ENCODE measurements at regions of chr2 and their contacts with region 1.

Region 1: GRCh38 chr2:158456309-158457066 is at the starts of genes CCDC148 and PKP4:
- DNase-seq: peak; percentile 95
- ATAC-seq: peak; percentile 97
- H3K4me3 Mint-ChIP-seq: peak within 1 kb of the TSS; percentile 92
- H3K27ac Mint-ChIP-seq: peak within 1 kb of the TSS; percentile 72
- H3K4me1 Mint-ChIP-seq: peaks cover 25% of the 10 kb centered on the region
- H3K27me3 Mint-ChIP-seq: peaks cover 5% of the 10 kb centered on the region
- total RNA-seq, gene CCDC148: 0.23 to 0.26 TPM
- total RNA-seq, gene PKP4: 39.2 to 58.4 TPM

Region 2: GRCh38 chr2:157628477-157629415 is 827.7 kb before region 1 on chr2 and contains the start of gene ACVR1C:
- CTCF ChIA-PET with region 1: no interaction called
- POLR2A ChIA-PET with region 1: no interaction called
- intact Hi-C with region 1: loop called in 1 of 2 experiments (anchors 2 kb)
- DNase-seq: peak; percentile 80
- ATAC-seq: peak; percentile 82
- H3K4me3 Mint-ChIP-seq: peak within 1 kb of the TSS; percentile 76
- H3K27ac Mint-ChIP-seq: peak within 1 kb of the TSS; percentile 23
- H3K4me1 Mint-ChIP-seq: peaks cover 34% of the 10 kb centered on the region
- H3K27me3 Mint-ChIP-seq: peaks cover 5% of the 10 kb centered on the region
- total RNA-seq, gene ACVR1C: 1.6 to 1.7 TPM

Region 3: DNA sequence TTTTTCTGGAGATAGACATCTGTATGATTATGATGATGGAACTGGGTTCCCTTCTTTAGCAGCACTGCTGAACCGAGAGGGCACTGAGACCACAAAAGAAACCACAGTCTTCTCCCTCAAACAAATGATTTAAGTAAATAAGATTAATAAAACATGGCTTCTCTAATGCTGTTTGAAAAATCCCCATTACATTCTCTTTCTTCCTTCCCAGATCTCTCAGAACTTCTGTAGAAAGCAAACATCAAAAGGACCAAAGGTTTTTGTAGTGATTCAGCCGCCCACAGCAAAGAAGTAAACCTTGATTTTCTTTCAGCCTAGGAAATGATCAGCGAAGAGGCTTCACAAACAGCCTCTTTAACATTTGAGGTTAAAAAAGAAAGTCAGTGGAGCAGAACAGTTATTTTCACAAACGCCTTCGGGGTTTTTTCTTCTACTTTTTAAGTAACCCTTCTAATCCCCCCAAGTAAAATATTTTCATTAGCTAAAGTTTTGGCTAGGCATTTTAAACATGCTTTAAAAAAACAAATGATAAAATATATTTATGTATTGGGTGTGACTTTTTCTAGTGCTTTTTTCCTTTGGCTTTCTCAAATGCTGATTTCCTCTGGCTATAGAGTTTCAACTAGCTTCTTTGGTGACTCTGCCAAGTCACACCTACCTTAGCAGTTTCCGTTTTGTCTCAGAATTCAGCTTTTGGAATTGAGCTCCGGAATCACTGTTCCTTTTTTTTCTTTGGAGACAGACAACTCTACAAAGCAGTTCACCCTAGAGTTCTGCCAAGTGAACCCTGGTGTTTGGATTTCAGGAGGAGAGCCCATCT is 265.2 kb before region 1 on chr2:
- CTCF ChIA-PET with region 1: no interaction called
- POLR2A ChIA-PET with region 1: no interaction called
- intact Hi-C with region 1: loop called (anchors 5 kb)
- DNase-seq: peak; percentile 45
- ATAC-seq: peak; percentile 91
- H3K4me3 Mint-ChIP-seq: peak overlapping the region; percentile 15
- H3K27ac Mint-ChIP-seq: peak overlapping the region; percentile 63
- H3K4me1 Mint-ChIP-seq: peaks cover 31% of the 10 kb centered on the region
- H3K27me3 Mint-ChIP-seq: peaks cover 30% of the 10 kb centered on the region

Region 4: GRCh38 chr2:158391876-158392275 is 64.6 kb before region 1 on chr2:
- CTCF ChIA-PET with region 1: no interaction called
- POLR2A ChIA-PET with region 1: no interaction called
- intact Hi-C with region 1: loop called in 1 of 2 experiments (anchors 2 kb)
- DNase-seq: no peak
- ATAC-seq: peak; percentile 92
- H3K4me3 Mint-ChIP-seq: no peak overlapping the region
- H3K27ac Mint-ChIP-seq: peak overlapping the region; percentile 59
- H3K4me1 Mint-ChIP-seq: peaks cover 8% of the 10 kb centered on the region
- H3K27me3 Mint-ChIP-seq: peaks cover 12% of the 10 kb centered on the region

Region 5: GRCh38 chr2:158578703-158579330 is 122.3 kb after region 1 on chr2:
- CTCF ChIA-PET with region 1: no interaction called
- POLR2A ChIA-PET with region 1: no interaction called
- intact Hi-C with region 1: no loop called
- DNase-seq: no peak
- ATAC-seq: no peak
- H3K4me3 Mint-ChIP-seq: no peak overlapping the region
- H3K27ac Mint-ChIP-seq: no peak overlapping the region
- H3K4me1 Mint-ChIP-seq: no peaks in the 10 kb centered on the region
- H3K27me3 Mint-ChIP-seq: no peaks in the 10 kb centered on the region

Region 6: DNA sequence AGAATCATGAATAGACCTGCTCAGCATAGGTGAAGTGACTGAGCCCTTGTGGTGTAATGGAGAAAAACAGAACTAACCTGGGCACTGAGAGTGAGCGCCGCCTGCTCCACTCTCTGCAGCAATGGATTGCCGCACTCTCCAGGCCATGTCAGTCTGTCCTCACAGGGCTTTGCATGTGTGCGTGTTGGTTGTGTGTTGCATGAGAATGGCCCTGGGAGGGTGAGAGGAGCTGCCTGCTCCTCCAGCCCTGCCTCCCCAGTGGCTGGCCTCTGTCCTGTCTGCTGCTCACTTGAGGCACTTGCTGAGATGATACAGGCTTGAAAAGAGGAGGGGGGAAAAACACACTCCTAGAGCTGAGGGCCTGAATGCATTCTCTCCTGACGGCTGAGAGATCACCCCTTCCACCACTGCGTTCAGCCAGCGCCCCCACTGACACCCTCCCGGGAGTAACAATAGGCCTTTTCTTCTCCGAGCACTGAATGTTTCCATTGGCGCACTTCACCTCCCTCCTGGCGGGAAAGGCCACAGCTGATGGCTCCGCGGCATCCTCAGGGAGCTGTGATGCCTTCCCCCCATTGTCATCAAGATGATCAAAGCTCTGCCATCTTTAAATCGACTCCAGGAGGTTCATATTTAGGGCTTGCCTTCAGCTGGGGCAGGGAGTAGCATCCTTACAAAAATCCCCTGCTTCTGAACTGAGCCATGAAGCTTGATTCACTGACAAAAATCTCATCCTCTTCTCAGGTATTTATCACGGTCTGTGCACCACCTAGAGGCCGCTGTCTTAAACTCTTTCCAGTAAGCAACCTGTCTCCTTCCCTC is 288.8 kb after region 1 on chr2:
- CTCF ChIA-PET with region 1: no interaction called
- POLR2A ChIA-PET with region 1: no interaction called
- intact Hi-C with region 1: loop called (anchors 5 kb)
- DNase-seq: peak; percentile 65
- ATAC-seq: no peak
- H3K4me3 Mint-ChIP-seq: no peak overlapping the region
- H3K27ac Mint-ChIP-seq: no peak overlapping the region
- H3K4me1 Mint-ChIP-seq: no peaks in the 10 kb centered on the region
- H3K27me3 Mint-ChIP-seq: peaks cover 23% of the 10 kb centered on the region

Region 7: DNA sequence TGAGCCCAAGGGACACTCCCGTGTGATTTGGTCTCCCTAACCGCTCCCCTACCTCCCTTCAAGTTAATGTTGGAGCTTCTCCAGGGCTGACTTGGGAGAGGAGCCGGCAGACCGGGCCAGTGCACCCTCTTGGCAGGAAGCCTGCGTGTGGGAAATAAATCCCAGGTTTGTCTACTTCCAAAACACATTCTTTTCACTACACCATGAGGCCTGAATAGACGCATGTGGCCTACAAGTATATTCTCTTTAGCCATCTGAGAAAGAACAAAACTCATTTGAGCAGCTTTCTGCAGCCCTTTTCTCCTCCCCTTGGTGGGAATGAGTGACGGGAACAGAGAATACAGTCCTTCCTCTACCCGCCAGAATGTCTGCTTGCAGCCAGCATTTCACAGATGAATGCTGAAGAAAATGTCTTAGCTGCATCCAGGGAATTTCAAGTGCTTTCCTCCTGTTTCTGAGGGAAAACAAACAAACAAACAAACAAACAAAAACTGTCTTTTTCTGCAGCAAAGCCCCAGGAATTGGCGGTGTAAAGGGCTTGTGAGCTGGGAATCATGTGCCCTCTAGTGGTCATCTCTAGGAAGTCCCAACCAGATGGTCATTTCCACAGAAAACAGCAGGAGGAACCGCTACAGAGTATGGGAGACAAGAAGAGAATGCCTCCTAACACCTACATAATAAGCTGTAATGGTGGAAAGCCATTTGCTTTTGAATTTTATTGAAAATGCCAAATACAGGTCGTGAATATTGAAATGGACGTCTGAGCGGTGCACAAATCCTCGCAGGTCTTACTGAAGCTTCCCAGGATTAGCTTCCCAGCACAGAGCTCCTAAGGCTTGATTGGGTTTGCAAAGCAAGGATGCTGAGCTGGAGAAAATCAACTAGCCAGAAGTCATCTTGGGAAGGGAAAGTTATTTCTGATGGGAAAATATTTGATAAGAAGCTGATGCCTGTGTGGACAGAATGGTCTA is 297.4 kb after region 1 on chr2:
- CTCF ChIA-PET with region 1: interaction called, 5 read pairs
- POLR2A ChIA-PET with region 1: no interaction called
- intact Hi-C with region 1: loop called (anchors 5 kb)
- DNase-seq: peak; percentile 44
- ATAC-seq: peak; percentile 63
- H3K4me3 Mint-ChIP-seq: no peak overlapping the region
- H3K27ac Mint-ChIP-seq: no peak overlapping the region
- H3K4me1 Mint-ChIP-seq: peaks cover 3% of the 10 kb centered on the region
- H3K27me3 Mint-ChIP-seq: peaks cover 11% of the 10 kb centered on the region

Region 8: DNA sequence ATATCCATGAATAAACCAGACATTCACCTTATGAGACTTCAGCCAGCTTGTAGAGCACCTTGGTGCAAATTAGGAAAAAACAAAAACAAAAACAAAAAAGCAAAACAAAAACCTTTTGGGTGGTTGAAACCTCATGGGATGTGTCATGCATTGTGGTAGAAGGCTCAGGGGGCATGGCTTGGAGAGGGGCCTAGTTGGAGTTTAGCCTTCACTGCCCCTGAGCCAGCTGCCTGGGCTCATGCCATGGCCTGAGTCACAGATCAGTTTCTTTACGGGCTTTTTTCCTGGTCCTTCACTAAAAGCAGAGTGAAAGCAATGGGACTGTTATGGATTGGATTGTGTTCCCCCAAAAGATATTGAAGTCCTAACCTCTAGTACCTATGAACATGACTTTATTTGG is 316.6 kb after region 1 on chr2:
- CTCF ChIA-PET with region 1: no interaction called
- POLR2A ChIA-PET with region 1: no interaction called
- intact Hi-C with region 1: no loop called
- DNase-seq: no peak
- ATAC-seq: no peak
- H3K4me3 Mint-ChIP-seq: no peak overlapping the region
- H3K27ac Mint-ChIP-seq: no peak overlapping the region
- H3K4me1 Mint-ChIP-seq: no peaks in the 10 kb centered on the region
- H3K27me3 Mint-ChIP-seq: no peaks in the 10 kb centered on the region

Region 9: DNA sequence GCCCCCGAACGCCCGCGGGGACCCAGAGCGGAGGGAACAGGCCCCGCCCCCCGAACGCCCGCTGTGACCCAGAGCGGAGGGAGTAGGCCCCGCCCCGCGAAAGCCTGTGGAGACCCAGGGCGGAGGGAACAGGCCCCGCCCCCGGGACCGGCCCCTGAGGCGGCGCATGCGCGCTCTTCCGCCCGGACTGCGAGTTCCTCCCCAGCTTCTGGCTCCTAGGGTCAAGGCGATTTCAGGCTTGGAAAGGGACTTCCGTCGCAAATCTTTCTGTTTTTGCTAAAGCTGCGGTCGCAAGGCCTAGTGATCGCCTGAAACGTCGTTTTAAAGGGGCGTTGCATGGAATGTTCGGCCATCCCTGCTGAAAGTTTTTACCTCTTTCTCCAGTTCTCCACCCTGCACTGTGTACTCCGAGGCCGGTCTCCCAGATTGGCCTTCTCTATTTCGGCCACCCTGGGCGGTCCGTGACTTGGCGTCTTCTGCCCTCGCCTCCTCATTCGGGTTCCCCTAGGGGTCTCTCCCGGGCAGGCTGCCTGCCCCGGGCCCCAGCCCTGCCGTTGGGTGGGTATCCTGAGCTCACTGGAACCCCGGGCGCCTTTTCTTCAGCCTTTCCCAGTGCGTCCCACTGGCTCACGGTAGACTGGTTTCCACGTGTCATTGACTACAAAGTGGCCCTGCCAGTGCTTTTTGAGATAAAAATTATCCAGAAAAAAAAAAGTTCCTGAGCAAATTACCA is 830.4 kb after region 1 on chr2:
- CTCF ChIA-PET with region 1: no interaction called
- POLR2A ChIA-PET with region 1: no interaction called
- intact Hi-C with region 1: loop called in 1 of 2 experiments (anchors 5 kb)
- DNase-seq: peak; percentile 99
- ATAC-seq: peak; percentile 99
- H3K4me3 Mint-ChIP-seq: peak overlapping the region; percentile 84
- H3K27ac Mint-ChIP-seq: peak overlapping the region; percentile 83
- H3K4me1 Mint-ChIP-seq: peaks cover 29% of the 10 kb centered on the region
- H3K27me3 Mint-ChIP-seq: no peaks in the 10 kb centered on the region